Caco-2 (cell line): ENCODE measurements at regions of chr9 and their contacts with region 1.

Region 1: DNA sequence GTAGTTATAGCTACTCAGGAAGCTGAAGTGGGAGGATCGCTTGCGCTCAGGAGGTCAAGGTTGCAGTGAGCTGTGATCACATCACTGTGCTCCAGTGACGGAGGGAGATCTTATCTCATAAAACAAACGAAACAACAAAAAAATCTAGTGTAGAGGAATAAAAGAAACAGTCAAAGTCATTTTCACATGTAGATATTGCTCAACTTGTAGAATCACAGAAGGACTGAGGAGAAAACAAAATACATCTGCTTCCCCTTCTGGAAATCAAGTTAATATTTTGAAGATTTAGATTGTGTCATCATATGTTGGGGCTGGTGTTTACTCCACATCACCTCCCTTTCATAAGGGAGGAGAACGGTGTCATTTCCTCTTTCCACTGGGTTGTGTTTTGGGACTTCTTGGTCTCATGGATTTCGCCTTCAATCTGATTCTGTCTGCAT is 8.2 kb upstream of the SLC46A2 start:
- DNase-seq: no peak
- H3K4me3 ChIP-seq: no peak overlapping the region
- H3K4me3 Mint-ChIP-seq: no peak overlapping the region
- H3K27ac Mint-ChIP-seq: no peak overlapping the region
- H3K4me1 ChIP-seq: no peaks in the 10 kb centered on the region
- H3K4me1 Mint-ChIP-seq: no peaks in the 10 kb centered on the region
- H3K27me3 ChIP-seq: no peaks in the 10 kb centered on the region
- H3K27me3 Mint-ChIP-seq: peaks cover 5% of the 10 kb centered on the region
- CTCF ChIP-seq: no peak

Region 2: DNA sequence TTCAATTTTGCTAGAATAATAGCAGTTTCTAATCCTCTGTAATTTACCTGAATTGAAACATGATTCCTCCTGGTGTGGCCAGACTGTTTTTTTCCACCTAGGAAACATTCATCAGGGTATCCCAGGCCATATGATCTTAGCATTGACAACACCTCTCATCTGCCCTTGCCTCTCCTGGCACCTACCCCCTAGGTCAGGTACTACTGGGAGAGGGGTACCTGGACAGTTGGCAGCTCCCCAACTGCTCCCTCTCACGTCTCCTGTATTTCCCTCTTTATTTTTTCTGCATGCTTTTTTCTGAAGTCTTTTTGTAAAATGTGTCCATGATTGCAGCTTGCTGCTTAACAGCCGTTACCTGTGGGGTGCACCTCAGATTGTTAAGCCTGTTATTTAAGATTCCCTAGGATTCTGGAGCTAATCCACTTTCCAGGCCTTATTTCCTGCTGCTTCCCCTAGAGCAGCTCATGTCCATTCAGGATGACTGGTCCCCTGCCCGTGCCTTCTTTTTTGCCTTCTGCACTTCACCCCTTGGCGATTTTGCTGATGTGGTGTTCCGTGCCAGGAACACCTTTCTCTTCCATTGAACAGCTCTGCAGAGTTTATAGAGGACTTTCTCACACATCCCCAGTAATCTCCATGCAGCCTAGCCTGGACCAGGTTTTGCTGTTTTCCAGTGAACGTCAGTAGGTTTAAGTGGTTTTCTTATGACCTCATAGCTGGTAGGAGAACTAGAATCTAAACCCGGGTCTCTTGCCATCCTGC is 114.7 kb before region 1 on chr9:
- CTCF ChIA-PET with region 1: no interaction called
- POLR2A ChIA-PET with region 1: no interaction called
- intact Hi-C with region 1: no loop called
- DNase-seq: no peak
- H3K4me3 ChIP-seq: no peak overlapping the region
- H3K4me3 Mint-ChIP-seq: no peak overlapping the region
- H3K27ac Mint-ChIP-seq: no peak overlapping the region
- H3K4me1 ChIP-seq: peaks cover 15% of the 10 kb centered on the region; the same call in 1 of the 2 replicates
- H3K4me1 Mint-ChIP-seq: peaks cover 24% of the 10 kb centered on the region
- H3K27me3 ChIP-seq: no peaks in the 10 kb centered on the region
- H3K27me3 Mint-ChIP-seq: no peaks in the 10 kb centered on the region
- CTCF ChIP-seq: no peak

Region 3: DNA sequence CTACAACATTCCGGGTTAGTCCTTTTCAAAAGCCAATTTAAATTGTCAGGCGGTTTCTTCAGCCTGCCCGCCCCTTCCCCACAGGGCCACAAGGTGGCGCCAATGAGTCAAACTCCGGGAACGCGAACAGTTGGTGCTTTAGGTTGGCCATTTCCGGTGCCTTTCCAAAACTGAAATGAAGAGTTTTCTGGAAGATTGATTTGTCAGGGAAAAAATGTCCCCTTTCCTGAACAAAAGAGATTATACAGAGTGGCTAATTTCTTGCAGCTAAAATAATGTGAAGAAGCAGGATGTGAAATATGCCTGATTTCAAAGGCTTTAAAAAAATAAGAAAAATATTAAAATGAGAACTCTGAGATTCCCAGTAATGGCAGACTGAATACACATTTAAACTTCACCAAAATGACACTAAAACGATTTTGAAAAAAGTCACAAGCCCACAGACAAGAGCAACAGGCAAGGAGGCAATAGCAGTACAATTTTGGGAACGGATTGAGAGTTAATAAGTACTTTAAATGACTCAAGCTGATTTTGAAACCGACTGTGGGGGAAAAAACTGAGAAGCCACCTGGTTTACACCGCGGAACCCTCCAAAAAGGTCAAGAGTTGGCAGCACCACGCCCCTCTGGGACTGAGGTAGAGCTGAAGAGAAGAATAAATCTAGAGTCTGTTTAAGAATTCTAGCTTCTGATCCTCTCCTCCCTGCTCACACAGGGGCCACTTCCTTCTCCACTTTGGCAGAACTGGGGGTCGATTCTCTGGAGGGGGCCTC is 53.9 kb before region 1 on chr9:
- CTCF ChIA-PET with region 1: interaction called, 9 read pairs
- POLR2A ChIA-PET with region 1: no interaction called
- intact Hi-C with region 1: loop called (anchors 1 kb)
- DNase-seq: peak; percentile 66 to 87
- H3K4me3 ChIP-seq: no peak overlapping the region
- H3K4me3 Mint-ChIP-seq: no peak overlapping the region
- H3K27ac Mint-ChIP-seq: no peak overlapping the region
- H3K4me1 ChIP-seq: no peaks in the 10 kb centered on the region
- H3K4me1 Mint-ChIP-seq: peaks cover 16% of the 10 kb centered on the region
- H3K27me3 ChIP-seq: no peaks in the 10 kb centered on the region
- H3K27me3 Mint-ChIP-seq: no peaks in the 10 kb centered on the region
- CTCF ChIP-seq: peak; percentile 91 to 96

Region 4: DNA sequence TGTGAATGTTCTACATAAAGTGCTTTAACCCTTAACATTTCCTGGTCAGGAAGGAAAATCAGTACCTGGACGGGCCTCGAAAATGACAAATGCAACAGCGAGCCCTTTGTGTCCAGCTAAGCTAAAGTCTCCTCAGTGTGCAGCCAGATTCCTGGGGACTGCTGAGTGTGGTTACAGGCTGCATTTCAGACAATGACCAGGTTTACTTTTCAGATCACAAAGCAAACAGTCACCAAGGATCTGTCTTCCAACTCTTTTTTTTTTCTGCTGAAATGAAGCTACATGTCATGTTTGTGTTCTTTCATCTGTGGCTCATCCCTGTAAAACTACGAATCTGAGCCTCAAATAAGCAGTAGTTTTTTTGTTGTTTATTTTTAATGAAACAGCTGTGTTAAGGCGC is 29.0 kb before region 1 on chr9:
- CTCF ChIA-PET with region 1: interaction called, 4 read pairs
- POLR2A ChIA-PET with region 1: interaction called, 3 read pairs
- intact Hi-C with region 1: loop called (anchors 1 kb)
- DNase-seq: peak in 1 of 2 experiments; percentile 26
- H3K4me3 ChIP-seq: no peak overlapping the region
- H3K4me3 Mint-ChIP-seq: peak overlapping the region; percentile 33
- H3K27ac Mint-ChIP-seq: peak overlapping the region; percentile 42
- H3K4me1 ChIP-seq: 0 out of 2 replicates have a peak, but pooled peaks cover 8% of the 10 kb centered on the region
- H3K4me1 Mint-ChIP-seq: peaks cover 20% of the 10 kb centered on the region
- H3K27me3 ChIP-seq: no peaks in the 10 kb centered on the region
- H3K27me3 Mint-ChIP-seq: no peaks in the 10 kb centered on the region
- CTCF ChIP-seq: no peak